ENCODE measurements at regions of chr1 and their contacts with region 1.

Region 1: DNA sequence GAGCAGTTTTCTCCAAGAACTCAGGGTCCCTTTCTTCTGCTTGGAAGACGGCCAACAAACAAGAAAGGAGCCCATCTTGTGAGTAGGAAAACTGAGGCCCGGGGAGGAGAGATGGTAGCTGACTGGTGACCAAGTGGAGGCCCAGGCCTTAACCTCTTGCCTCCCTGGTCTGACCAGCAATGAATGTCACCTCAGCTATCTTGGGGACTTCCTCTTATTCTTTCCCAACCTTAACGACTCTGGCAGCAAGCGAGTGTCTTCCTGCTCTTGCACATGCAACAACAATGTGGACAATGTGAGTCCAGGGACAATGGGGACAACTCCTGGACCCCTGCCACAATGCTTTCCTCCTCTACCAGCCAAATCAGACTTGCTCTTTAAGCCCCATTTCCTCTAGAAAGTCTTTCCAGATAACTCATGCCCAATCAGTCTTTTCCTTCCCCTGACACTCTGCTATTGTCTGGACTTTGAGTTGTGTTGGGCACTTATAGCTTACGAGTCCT is 12.6 kb downstream of the HSPG2 start:
- DNase-seq: peak in 1 of 2 donors; percentile 84
- ATAC-seq: peak in 7 of 8 donors; percentile 8 to 43 (median 25)
- H3K4me3 ChIP-seq: no peak overlapping the region
- H3K27ac ChIP-seq: peak overlapping the region; percentile 66 to 99 (median 94)
- H3K4me1 ChIP-seq: peaks cover 64 to 100% (median 99%) of the 10 kb centered on the region in 9 donors
- H3K27me3 ChIP-seq: no peaks in the 10 kb centered on the region
- CTCF ChIP-seq: no peak

Region 2: DNA sequence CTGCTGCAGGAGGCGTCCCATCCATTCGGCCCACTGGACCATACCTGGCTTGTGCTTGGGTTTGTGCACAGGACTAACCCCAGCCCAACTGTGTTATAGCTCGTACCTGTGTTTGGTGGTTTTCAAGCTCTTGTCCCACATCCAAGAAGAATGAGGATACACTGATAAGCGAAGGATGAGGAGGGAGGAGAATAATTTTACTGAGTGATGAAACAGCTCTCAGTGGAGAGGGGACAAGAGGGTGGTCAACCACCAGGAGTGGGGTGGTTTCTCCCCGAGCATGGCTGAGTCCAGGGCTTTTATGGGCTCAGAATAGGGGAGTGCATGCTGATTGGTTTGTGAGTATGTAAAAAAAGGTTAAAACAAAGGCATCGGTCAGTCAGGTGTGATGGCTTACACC is 129.5 kb before region 1 on chr1:
- intact Hi-C with region 1: no loop called
- DNase-seq: no peak
- ATAC-seq: no peak
- H3K4me3 ChIP-seq: no peak overlapping the region
- H3K27ac ChIP-seq: no peak overlapping the region
- H3K4me1 ChIP-seq: peaks cover 0 to 11% (median 0%) of the 10 kb centered on the region in 9 donors
- H3K27me3 ChIP-seq: no peaks in the 10 kb centered on the region
- CTCF ChIP-seq: no peak

Region 3: DNA sequence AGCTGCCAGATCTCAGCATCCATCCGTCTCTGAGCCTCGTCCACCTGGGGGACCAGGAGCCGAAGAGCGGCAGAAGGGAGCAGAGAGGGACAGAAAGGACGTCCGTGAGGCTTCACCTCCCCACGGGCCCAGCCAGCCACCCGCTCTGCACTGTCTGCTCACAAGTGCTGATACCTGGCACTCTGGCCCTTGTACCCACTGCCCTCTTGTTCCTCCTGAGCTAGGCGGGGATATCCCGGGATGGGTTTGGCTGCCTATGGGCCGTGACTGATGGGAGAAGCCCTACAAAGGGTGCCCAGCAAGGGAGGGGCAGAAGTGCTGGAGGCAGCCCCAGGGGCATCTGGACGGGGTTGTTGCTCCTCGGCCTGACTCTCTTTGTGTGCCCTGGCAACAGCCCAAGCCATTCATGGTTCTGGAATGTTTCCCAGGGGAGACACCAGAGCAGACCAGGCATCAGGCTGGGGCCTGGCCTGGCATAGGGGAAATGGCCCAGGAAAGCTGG is 54.9 kb before region 1 on chr1:
- intact Hi-C with region 1: no loop called
- DNase-seq: peak; percentile 70 to 82
- ATAC-seq: peak; percentile 57 to 88 (median 80)
- H3K4me3 ChIP-seq: no peak overlapping the region
- H3K27ac ChIP-seq: peak overlapping the region in 8 of 10 donors; percentile 7 to 69 (median 55)
- H3K4me1 ChIP-seq: peaks cover 6 to 44% (median 14%) of the 10 kb centered on the region in 9 donors
- H3K27me3 ChIP-seq: no peaks in the 10 kb centered on the region
- CTCF ChIP-seq: no peak

Region 4: DNA sequence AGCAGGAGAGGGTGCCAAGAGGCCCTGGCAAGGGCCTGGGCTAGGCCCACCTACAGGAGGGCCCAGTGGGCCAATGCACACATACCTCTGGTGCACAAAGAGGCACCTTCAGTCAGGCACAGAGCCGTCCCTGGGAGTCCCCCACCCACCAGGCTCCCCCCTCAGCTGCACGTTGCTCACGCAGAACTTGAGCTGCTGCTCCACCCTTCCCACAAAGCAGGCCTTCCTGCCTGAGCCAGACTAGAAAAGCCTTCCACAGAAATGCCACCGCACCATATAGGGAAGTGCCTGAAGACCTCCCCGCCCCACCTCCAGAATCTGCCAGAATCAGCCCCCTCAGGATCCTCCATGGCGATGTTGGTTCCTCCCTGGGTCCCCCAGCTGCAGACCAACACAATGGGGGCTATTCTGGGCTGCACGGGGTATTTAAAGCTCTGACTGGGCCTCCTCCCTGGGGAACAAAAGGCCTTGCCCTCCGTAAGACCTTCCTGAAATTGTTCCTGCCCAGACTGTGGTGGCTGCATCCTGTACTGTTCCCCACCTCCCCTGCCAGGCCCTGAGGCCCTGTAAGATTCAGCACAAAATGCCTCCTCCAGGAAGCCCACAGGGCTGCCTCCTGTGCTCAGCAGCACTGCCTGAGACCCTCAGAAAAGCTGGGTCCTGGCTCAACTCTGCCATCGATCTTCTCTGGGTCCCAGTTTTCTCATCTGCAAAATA is 14.6 kb before region 1 on chr1:
- intact Hi-C with region 1: loop called in 1 of 10 experiments (anchors 2 kb)
- DNase-seq: peak; percentile 75 to 88
- ATAC-seq: peak; percentile 41 to 75 (median 60)
- H3K4me3 ChIP-seq: peak overlapping the region in 3 of 10 donors; percentile 0 to 10 (median 5)
- H3K27ac ChIP-seq: peak overlapping the region; percentile 84 to 99 (median 92)
- H3K4me1 ChIP-seq: peaks cover 88 to 100% (median 98%) of the 10 kb centered on the region in 9 donors
- H3K27me3 ChIP-seq: no peaks in the 10 kb centered on the region
- CTCF ChIP-seq: no peak